HCT116 (cell line): ENCODE measurements at regions of chr5 and their contacts with region 1.

Region 1: GRCh38 chr5:56900858-56901578 is 8.4 kb upstream of the SETD9 start:
- DNase-seq: peak; percentile 19
- ATAC-seq: peak; percentile 84
- H3K4me3 ChIP-seq: no peak overlapping the region
- H3K27ac ChIP-seq: no peak overlapping the region
- H3K4me1 ChIP-seq: no peaks in the 10 kb centered on the region
- H3K27me3 ChIP-seq: no peaks in the 10 kb centered on the region
- CTCF ChIP-seq: peak; percentile 56 to 80 (median 73)
- POLR2A ChIP-seq: no peak
- RAD21 ChIP-seq: peak; percentile 88

Region 2: DNA sequence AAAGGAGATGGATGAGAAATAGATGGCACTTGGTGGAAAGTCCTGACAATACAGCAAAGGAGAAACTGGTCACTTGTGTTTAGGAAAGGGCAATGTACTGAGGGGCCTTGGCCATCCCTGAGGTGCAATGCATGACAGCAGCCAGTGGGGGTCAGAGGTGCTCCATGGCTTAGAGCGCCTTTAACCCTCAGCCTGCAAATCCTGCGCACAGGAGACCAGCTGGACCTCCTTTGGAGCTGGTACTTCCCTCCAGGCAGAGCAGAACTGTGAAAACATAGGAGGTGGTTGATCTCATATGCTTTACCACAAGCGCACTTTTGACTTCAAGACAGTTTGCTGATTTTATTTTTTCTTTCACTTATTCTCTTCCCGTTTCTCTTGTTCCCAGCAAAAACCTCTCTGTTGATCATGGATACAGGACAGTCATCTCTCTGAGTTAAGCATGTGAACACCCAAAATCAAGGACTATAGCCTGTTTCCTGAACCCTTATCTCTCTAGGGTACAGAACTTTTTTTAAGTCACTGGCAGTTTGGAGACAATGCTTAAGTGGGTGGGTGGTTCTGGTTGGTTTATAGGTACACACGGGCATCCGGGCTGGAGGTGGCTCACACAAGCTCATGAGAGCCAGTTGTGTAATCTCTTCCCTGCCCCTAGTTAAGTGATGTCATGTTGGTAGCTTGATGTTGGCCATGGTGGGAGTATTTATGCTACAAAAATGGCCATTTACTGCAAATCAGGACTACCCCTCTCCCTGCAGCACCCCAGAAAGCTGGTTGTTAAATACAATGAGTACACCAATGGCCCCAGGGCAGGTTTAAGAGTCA is 630.2 kb before region 1 on chr5:
- CTCF ChIA-PET with region 1: interaction called, 15 read pairs
- POLR2A ChIA-PET with region 1: no interaction called
- RAD21 ChIA-PET with region 1: interaction called in 1 of 2 experiments, 4 read pairs
- intact Hi-C with region 1: loop called (anchors 2 kb)
- DNase-seq: peak; percentile 62
- ATAC-seq: peak; percentile 99
- H3K4me3 ChIP-seq: no peak overlapping the region
- H3K27ac ChIP-seq: no peak overlapping the region
- H3K4me1 ChIP-seq: no peaks in the 10 kb centered on the region
- H3K27me3 ChIP-seq: no peaks in the 10 kb centered on the region
- CTCF ChIP-seq: peak; percentile 82 to 99 (median 96)
- POLR2A ChIP-seq: no peak
- RAD21 ChIP-seq: peak; percentile 96

Region 3: DNA sequence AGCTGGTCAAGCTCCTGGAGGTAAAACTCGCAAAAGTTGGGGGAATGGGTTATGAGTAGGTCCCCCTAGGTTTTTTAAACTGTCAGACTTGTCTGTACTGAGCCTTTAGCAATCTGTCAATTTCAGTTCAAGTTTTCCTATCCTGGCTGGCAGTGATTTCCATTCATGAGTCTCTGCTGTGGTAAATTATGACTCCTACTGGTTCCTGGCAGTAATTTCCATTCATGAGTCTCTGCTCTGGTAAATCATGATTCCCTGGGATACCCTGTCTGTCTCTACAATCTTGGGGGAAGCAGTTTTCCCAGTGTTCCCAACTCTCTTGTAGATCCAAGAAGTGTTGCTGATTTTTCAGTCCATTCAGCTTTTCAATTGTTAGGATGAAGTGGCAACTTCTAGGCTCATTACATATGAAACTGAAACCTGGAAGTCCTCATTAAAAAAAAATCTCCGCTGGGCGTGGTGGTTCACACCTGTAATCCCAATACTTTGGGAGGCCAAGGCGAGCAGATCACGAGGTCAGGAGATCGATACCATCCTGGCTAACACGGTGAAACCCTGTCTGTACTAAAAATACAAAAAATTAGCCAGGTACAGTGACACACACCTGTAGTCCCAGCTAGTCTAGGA is 181.5 kb after region 1 on chr5:
- CTCF ChIA-PET with region 1: no interaction called
- POLR2A ChIA-PET with region 1: no interaction called
- RAD21 ChIA-PET with region 1: no interaction called
- intact Hi-C with region 1: loop called (anchors 2 kb)
- DNase-seq: peak; percentile 32
- ATAC-seq: peak; percentile 85
- H3K4me3 ChIP-seq: no peak overlapping the region
- H3K27ac ChIP-seq: no peak overlapping the region
- H3K4me1 ChIP-seq: no peaks in the 10 kb centered on the region
- H3K27me3 ChIP-seq: no peaks in the 10 kb centered on the region
- CTCF ChIP-seq: peak; percentile 50 to 58 (median 52); a peak in 4 of 6 replicates
- POLR2A ChIP-seq: no peak
- RAD21 ChIP-seq: peak; percentile 81

Region 4: DNA sequence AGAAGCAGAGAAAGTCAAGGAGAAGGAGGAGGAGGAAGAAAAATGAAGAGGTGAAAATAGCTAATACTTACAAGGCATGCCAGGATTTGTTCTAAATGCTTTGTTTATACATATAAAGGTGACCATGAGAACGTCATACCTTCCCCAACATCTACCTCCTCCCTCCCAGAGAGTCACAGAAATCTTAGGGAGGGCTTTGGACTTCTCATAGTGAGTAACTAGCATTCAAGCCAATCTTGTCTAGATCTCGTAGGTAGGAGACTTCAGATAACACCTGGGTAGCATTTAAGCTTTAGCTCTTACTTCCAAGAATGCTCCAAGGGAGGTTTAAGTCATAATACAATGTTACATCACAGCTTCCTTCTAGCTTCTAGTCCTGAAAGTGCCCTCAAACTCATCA is 236.4 kb after region 1 on chr5:
- CTCF ChIA-PET with region 1: interaction called, 37 read pairs
- POLR2A ChIA-PET with region 1: no interaction called
- RAD21 ChIA-PET with region 1: interaction called, 4 to 5 read pairs
- intact Hi-C with region 1: loop called (anchors 1 kb)
- DNase-seq: no peak
- ATAC-seq: no peak
- H3K4me3 ChIP-seq: no peak overlapping the region
- H3K27ac ChIP-seq: no peak overlapping the region
- H3K4me1 ChIP-seq: no peaks in the 10 kb centered on the region; a peak in 1 of 4 replicates
- H3K27me3 ChIP-seq: no peaks in the 10 kb centered on the region
- CTCF ChIP-seq: no peak
- POLR2A ChIP-seq: no peak
- RAD21 ChIP-seq: no peak

Region 5: GRCh38 chr5:57221049-57221568 is 320.1 kb after region 1 on chr5:
- CTCF ChIA-PET with region 1: interaction called, 5 read pairs
- POLR2A ChIA-PET with region 1: no interaction called
- RAD21 ChIA-PET with region 1: no interaction called
- intact Hi-C with region 1: loop called (anchors 1 kb)
- DNase-seq: peak; percentile 35
- ATAC-seq: peak; percentile 74
- H3K4me3 ChIP-seq: no peak overlapping the region
- H3K27ac ChIP-seq: peak overlapping the region; percentile 37; the same call in 1 of the 2 replicates
- H3K4me1 ChIP-seq: peaks cover 14 to 25% of the 10 kb centered on the region in 2 experiments
- H3K27me3 ChIP-seq: no peaks in the 10 kb centered on the region
- CTCF ChIP-seq: peak; percentile 43 to 89 (median 69); a peak in 5 of 6 replicates
- POLR2A ChIP-seq: no peak
- RAD21 ChIP-seq: peak; percentile 78

Region 6: GRCh38 chr5:57277085-57277484 is 376.1 kb after region 1 on chr5:
- CTCF ChIA-PET with region 1: interaction called, 4 read pairs
- POLR2A ChIA-PET with region 1: no interaction called
- RAD21 ChIA-PET with region 1: no interaction called
- intact Hi-C with region 1: loop called (anchors 1 kb)
- DNase-seq: peak; percentile 13
- ATAC-seq: no peak
- H3K4me3 ChIP-seq: no peak overlapping the region
- H3K27ac ChIP-seq: no peak overlapping the region
- H3K4me1 ChIP-seq: peaks cover 0 to 4% of the 10 kb centered on the region in 2 experiments; a peak in 1 of 4 replicates
- H3K27me3 ChIP-seq: no peaks in the 10 kb centered on the region
- CTCF ChIP-seq: peak; percentile 18 to 55 (median 54); a peak in 4 of 6 replicates
- POLR2A ChIP-seq: no peak
- RAD21 ChIP-seq: peak; percentile 72

Region 7: GRCh38 chr5:58460732-58461286 is 1559.8 kb after region 1 on chr5:
- CTCF ChIA-PET with region 1: no interaction called
- POLR2A ChIA-PET with region 1: no interaction called
- RAD21 ChIA-PET with region 1: no interaction called
- intact Hi-C with region 1: loop called (anchors 5 kb)
- DNase-seq: peak; percentile 77
- ATAC-seq: peak; percentile 71
- H3K4me3 ChIP-seq: peak overlapping the region; percentile 82
- H3K27ac ChIP-seq: peak overlapping the region; percentile 92
- H3K4me1 ChIP-seq: peaks cover 8 to 45% of the 10 kb centered on the region in 2 experiments
- H3K27me3 ChIP-seq: no peaks in the 10 kb centered on the region
- CTCF ChIP-seq: peak; percentile 63 to 81 (median 77)
- POLR2A ChIP-seq: no peak
- RAD21 ChIP-seq: peak; percentile 91